Activated CD4-positive, alpha-beta memory T cell treated with anti-CD3 and anti-CD28 coated beads, Interleukin-2, amount 10 ng/mL, durations not matched to agents 7 days and 5 days (primary cell): ENCODE measurements at regions of chr19 and their contacts with region 1.

Region 1: GRCh38 chr19:15418588-15419412 is at the start of gene AKAP8L:
- DNase-seq: peak; percentile 99
- H3K4me3 Mint-ChIP-seq: peak within 1 kb of the TSS; percentile 97
- H3K27ac Mint-ChIP-seq: peak within 1 kb of the TSS; percentile 97
- H3K4me1 Mint-ChIP-seq: peaks cover 42% of the 10 kb centered on the region
- H3K27me3 Mint-ChIP-seq: no peaks in the 10 kb centered on the region
- total RNA-seq, gene AKAP8L: 96.3 to 98.2 TPM

Region 2: GRCh38 chr19:15304140-15304705 is 114.6 kb before region 1 on chr19:
- CTCF ChIA-PET with region 1: no interaction called
- POLR2A ChIA-PET with region 1: no interaction called
- DNase-seq: no peak
- H3K4me3 Mint-ChIP-seq: no peak overlapping the region
- H3K27ac Mint-ChIP-seq: peak overlapping the region; percentile 55
- H3K4me1 Mint-ChIP-seq: peaks cover 68% of the 10 kb centered on the region
- H3K27me3 Mint-ChIP-seq: no peaks in the 10 kb centered on the region

Region 3: GRCh38 chr19:15318241-15318691 is 100.5 kb before region 1 on chr19:
- CTCF ChIA-PET with region 1: no interaction called
- POLR2A ChIA-PET with region 1: no interaction called
- DNase-seq: no peak
- H3K4me3 Mint-ChIP-seq: no peak overlapping the region
- H3K27ac Mint-ChIP-seq: no peak overlapping the region
- H3K4me1 Mint-ChIP-seq: peaks cover 68% of the 10 kb centered on the region
- H3K27me3 Mint-ChIP-seq: no peaks in the 10 kb centered on the region

Region 4: DNA sequence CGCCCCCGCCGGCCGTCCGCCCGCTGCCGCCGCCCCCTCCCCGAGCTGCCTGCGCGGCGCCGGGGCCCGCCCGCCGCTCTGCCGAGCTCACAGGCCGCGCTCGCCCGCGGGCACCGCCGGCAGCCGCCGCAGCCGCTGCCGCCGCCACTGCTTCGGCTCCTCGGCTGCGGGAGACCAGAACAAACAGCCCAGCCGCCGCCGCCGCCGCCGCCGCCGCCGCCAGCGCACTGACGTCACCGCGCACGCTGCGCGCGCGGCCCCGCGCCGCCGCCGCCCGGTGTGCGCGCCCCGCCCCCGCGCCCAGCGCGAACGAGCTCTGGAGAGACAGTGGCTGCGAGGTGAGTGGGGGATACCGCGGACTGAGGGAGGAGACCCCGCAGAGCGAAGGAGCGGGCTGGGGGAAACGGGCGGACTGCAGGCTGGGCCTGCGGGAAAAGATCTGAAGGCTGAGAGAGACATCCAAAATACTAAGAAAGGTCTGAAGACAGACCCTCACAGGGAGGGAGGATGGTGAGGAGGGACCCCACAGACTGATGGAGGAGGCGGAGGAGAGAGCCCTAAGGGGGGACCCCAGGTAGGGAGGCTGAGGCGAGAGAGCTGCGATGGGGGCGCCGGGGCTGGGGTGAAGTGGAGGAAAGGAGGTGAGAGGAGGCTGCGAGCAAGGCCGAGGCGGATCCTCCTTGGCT is 86.3 kb before region 1 on chr19 and contains the start of gene BRD4:
- CTCF ChIA-PET with region 1: interaction called, 9 read pairs
- POLR2A ChIA-PET with region 1: interaction called, 16 read pairs
- DNase-seq: peak; percentile 80
- H3K4me3 Mint-ChIP-seq: peak within 1 kb of the TSS; percentile 95
- H3K27ac Mint-ChIP-seq: peak within 1 kb of the TSS; percentile 91
- H3K4me1 Mint-ChIP-seq: peaks cover 37% of the 10 kb centered on the region
- H3K27me3 Mint-ChIP-seq: no peaks in the 10 kb centered on the region
- total RNA-seq, gene BRD4: 103 to 110 TPM

Region 5: GRCh38 chr19:15432629-15433518 is 14.1 kb after region 1 on chr19:
- CTCF ChIA-PET with region 1: interaction called, 26 read pairs
- POLR2A ChIA-PET with region 1: interaction called, 67 read pairs
- DNase-seq: peak; percentile 95
- H3K4me3 Mint-ChIP-seq: peak overlapping the region; percentile 93
- H3K27ac Mint-ChIP-seq: peak overlapping the region; percentile 94
- H3K4me1 Mint-ChIP-seq: peaks cover 36% of the 10 kb centered on the region
- H3K27me3 Mint-ChIP-seq: no peaks in the 10 kb centered on the region

Region 6: GRCh38 chr19:15456871-15457700 is 38.3 kb after region 1 on chr19:
- CTCF ChIA-PET with region 1: interaction called, 17 read pairs
- POLR2A ChIA-PET with region 1: interaction called, 92 read pairs
- DNase-seq: no peak
- H3K4me3 Mint-ChIP-seq: no peak overlapping the region
- H3K27ac Mint-ChIP-seq: no peak overlapping the region
- H3K4me1 Mint-ChIP-seq: peaks cover 27% of the 10 kb centered on the region
- H3K27me3 Mint-ChIP-seq: no peaks in the 10 kb centered on the region

Region 7: DNA sequence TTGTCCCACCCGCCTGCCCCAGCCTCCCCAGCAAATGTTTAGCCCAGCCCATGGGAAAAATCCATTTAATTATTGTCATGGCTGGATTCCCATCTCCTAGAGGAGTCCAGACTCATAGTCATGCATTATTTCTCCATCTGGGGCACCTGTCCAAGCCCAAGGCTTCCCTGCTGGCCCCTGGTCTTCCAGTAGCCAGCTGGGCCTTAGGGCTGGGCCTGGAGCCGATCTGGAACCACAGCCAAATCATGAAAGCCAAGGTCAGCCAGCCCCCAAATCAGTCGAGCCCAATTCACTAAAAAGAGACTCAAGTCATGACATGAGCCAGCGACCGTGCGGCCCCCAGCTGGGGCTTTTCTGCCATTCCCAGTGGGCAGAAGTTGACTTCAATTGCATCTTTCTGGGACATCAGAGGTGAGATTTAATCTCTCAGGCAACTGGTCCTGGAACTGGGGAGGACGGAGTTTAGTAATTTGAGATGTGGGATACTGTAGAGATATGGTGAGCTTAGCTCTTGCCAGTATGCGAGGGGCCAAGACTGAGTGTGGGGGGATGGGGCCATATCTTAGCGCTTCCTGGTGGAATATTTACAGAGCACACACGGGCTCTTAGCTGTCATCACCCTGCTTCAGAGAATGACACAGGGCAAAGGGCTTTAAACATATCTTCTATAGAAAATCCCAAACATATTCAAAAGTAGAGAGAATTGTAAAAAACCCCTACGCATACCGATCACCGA is 69.9 kb after region 1 on chr19:
- CTCF ChIA-PET with region 1: no interaction called
- POLR2A ChIA-PET with region 1: no interaction called
- DNase-seq: no peak
- H3K4me3 Mint-ChIP-seq: no peak overlapping the region
- H3K27ac Mint-ChIP-seq: no peak overlapping the region
- H3K4me1 Mint-ChIP-seq: peaks cover 5% of the 10 kb centered on the region
- H3K27me3 Mint-ChIP-seq: peaks cover 10% of the 10 kb centered on the region

Region 8: DNA sequence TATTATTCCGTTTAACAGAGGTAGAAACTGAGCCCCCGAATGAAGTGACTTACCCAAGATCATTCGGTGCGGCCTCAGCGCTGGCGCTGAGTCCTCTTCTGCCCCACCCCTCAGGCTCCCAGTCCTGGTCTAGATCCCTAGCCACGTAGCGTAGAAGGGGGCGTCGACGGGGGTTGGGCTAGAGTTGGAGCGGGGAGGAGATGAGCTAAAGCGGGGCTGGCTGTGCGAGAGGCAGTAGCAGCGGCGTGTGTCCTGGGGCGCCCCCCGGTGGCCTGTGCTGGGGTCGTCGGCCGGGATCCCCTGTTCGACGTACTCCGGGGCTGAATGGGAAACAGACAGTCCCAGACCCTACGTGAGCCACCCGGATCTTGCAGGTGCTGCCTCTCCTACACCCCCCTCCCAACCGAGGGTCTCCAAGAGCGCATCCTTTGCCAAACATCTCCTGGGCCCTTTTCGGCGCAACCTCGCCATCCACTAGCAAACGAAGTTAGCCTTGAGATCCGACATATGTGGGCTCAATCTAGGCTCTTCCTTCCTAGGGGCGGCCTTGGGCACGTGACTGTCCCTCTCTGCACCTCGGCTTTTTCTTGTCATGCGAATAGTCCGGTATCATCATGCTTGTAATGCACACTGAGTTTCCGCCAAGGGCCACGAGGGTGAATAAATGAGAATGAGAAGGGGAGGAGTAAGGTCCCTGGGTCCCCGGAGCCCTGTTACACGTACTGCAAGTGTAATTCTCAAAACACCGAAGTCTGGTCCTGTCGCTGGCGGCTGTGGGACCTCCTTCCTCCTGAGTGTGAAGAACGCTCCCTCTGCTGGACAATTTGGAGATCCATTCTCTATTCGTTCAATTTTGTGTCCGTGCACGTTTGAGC is 137.2 kb after region 1 on chr19:
- CTCF ChIA-PET with region 1: interaction called, 242 read pairs
- POLR2A ChIA-PET with region 1: interaction called, 101 read pairs
- DNase-seq: peak; percentile 97
- H3K4me3 Mint-ChIP-seq: peak overlapping the region; percentile 85
- H3K27ac Mint-ChIP-seq: peak overlapping the region; percentile 76
- H3K4me1 Mint-ChIP-seq: peaks cover 29% of the 10 kb centered on the region
- H3K27me3 Mint-ChIP-seq: peaks cover 9% of the 10 kb centered on the region